SK-N-SH (cell line): ENCODE measurements at regions of chr5 and their contacts with region 1.

Region 1: DNA sequence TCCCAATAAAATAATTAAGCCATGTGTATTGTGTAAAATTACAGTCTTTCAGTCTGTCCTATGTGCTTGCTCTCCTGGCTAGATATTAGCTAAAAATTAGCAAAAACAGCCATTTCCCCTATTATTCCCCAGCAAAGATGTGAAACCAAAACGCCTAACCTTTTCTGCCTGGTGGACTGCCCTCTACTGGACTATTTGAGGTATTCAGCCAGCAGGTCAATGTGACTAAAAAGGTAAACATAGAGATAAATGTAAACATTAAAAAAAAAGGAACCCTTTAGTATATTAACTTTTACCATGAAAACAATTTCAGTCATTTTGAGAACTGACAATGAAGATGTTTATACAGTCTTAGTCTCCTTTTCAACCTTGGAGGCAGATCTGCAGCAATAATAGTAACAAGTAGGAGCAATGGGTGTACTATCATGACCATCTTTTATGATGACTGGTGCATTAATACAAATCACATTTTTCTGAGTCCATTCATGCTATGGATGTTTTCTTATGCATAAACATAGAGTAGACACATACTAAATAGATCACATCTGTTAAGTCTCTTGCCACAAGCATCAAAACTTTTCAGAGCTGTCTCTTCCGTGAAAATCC is 10.1 kb downstream of the ATG12 start:
- DNase-seq: peak; percentile 46
- H3K4me3 ChIP-seq: no peak overlapping the region
- H3K27ac ChIP-seq: no peak overlapping the region
- H3K4me1 ChIP-seq: no peaks in the 10 kb centered on the region
- H3K27me3 ChIP-seq: no peaks in the 10 kb centered on the region
- CTCF ChIP-seq: peak; percentile 93
- EP300 ChIP-seq: no peak
- RAD21 ChIP-seq: peak; percentile 68

Region 2: GRCh38 chr5:115718927-115719326 is 112.3 kb before region 1 on chr5:
- CTCF ChIA-PET with region 1: no interaction called
- POLR2A ChIA-PET with region 1: no interaction called
- DNase-seq: no peak
- H3K4me3 ChIP-seq: no peak overlapping the region
- H3K27ac ChIP-seq: no peak overlapping the region
- H3K4me1 ChIP-seq: no peaks in the 10 kb centered on the region
- H3K27me3 ChIP-seq: no peaks in the 10 kb centered on the region
- CTCF ChIP-seq: no peak
- EP300 ChIP-seq: no peak
- RAD21 ChIP-seq: no peak

Region 3: DNA sequence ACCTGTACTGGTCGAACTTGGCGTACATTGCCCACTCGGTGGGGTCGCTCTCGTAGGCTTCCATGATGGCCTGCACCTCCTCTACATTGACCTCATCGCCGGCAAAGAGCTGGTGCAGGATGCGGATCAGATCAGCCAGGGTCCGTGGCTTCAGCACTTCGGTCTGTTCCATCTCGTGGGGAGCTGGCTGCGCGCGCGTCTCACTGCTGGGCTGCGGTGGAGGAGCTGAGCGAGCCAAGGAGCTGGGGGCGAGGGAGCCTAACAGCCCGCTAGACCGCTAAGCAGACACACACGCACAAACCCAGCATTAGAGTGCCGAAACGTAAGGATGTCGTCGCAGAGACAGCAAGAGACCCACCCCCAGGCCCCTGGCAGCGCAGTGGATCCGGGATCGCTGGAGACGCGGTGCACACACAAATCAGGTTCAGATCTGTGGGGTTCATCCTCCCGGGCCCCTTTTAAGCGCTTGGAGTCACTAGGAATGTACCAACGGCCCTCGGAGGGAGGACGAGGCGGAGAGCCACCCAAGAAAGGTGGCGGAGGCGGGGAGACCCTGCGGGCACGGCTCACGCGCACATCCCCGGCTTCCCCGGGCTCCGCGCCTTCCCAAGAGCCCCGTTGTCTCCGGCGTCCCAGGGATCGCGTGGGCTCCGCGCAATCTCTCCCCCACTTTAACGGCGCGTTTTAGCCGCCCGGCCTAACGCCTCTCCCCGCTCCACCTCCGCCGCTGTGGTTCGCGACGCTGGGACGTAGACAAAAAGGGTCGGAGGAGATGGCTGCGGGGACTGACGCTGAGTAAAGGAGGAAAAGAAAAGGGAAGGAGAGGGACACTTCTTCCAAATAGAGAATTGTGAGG is 14.8 kb before region 1 on chr5 and contains the start of gene CDO1:
- CTCF ChIA-PET with region 1: interaction called, 11 read pairs
- POLR2A ChIA-PET with region 1: no interaction called
- DNase-seq: peak; percentile 85
- H3K4me3 ChIP-seq: peak within 1 kb of the TSS; percentile 54 to 55
- H3K27ac ChIP-seq: peak within 1 kb of the TSS in 1 of 2 experiments; percentile 69; a peak in 1 of 4 replicates
- H3K4me1 ChIP-seq: peaks cover 0 to 13% of the 10 kb centered on the region in 2 experiments; a peak in 2 of 4 replicates
- H3K27me3 ChIP-seq: peaks cover 35% of the 10 kb centered on the region
- CTCF ChIP-seq: no peak
- EP300 ChIP-seq: no peak
- RAD21 ChIP-seq: no peak
- polyA plus RNA-seq, gene CDO1: 2.9 and 3.1 TPM in 2 replicates

Region 4: DNA sequence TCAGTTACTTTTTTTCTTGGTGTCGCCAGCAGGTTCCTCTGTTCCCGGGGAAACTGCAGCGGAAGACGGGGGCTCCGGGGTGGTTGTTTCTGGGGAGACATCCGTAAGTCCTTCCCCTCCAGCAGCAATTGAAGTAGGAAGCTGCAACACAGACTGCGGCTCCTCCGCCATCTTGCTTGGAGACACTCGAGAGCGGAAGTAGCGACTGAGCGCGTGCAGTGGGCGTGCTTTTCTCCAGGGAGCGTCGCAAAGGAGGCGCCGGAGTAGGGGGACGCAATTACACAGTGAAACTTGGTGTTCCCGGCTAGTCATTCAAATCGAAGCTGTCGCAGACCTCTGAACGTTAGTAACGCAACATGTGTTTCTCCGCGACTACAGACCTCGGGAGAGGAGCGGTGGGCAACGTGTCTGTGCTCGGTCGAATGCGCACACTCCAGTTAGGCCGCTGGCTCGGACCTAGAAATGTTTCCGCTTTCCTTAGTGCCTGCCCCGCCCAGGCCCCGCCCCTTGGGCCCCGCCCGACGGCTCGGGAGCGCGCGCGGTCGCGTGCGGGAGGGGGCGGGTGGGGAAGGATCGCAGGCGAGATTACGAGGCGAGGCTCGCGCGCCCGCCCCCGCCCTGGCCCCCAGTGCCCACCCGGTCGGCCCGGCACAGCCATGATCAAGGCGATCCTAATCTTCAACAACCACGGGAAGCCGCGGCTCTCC is 10.3 kb after region 1 on chr5 and contains the starts of genes AP3S1 and ATG12:
- CTCF ChIA-PET with region 1: interaction called, 11 read pairs
- POLR2A ChIA-PET with region 1: no interaction called
- DNase-seq: peak; percentile 93
- H3K4me3 ChIP-seq: peak within 1 kb of the TSS; percentile 87 to 89
- H3K27ac ChIP-seq: peak within 1 kb of the TSS; percentile 95 to 96
- H3K4me1 ChIP-seq: peaks cover 9 to 21% of the 10 kb centered on the region in 2 experiments; a peak in 3 of 4 replicates
- H3K27me3 ChIP-seq: no peaks in the 10 kb centered on the region
- CTCF ChIP-seq: no peak
- EP300 ChIP-seq: no peak
- RAD21 ChIP-seq: no peak
- polyA plus RNA-seq, gene AP3S1: 21.6 and 26.3 TPM in 2 replicates
- polyA plus RNA-seq, gene ATG12: 29.1 and 39.0 TPM in 2 replicates